Dendritic cell treated with granulocyte-macrophage colony-stimulating factor and Interleukin-4, amounts not matched to agents 40 ng/mL and 50 ng/mL, for 4 days (primary cell): ENCODE measurements at regions of chr4 and their contacts with region 1.

Region 1: GRCh38 chr4:10582059-10582686 is 102.4 kb downstream of the CLNK start:
- H3K4me3 Mint-ChIP-seq: no peak overlapping the region
- H3K27ac Mint-ChIP-seq: no peak overlapping the region
- H3K4me1 Mint-ChIP-seq: peaks cover 13% of the 10 kb centered on the region
- H3K27me3 Mint-ChIP-seq: no peaks in the 10 kb centered on the region

Region 2: DNA sequence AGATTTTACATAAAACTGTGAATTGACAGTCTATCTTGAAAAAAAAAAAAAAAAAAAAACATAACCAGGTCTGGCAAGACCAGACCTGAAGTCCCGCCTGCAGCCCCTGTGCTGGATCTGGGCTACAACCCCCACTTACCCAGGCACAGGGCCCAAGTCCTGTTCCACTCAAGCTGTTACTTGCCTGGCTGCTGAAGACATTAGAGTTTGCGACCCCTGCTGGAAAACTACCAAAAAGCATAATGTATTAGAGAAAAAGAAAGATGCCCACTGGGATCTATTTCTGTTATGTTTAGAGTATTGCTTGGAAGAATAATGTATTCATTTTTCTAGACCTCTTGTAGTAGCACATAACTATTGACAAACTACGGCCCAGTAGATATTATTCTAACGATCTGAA is 841.8 kb after region 1 on chr4:
- intact Hi-C with region 1: loop called (anchors 2 kb)
- H3K4me3 Mint-ChIP-seq: no peak overlapping the region
- H3K27ac Mint-ChIP-seq: no peak overlapping the region
- H3K4me1 Mint-ChIP-seq: peaks cover 18% of the 10 kb centered on the region
- H3K27me3 Mint-ChIP-seq: peaks cover 27% of the 10 kb centered on the region

Region 3: DNA sequence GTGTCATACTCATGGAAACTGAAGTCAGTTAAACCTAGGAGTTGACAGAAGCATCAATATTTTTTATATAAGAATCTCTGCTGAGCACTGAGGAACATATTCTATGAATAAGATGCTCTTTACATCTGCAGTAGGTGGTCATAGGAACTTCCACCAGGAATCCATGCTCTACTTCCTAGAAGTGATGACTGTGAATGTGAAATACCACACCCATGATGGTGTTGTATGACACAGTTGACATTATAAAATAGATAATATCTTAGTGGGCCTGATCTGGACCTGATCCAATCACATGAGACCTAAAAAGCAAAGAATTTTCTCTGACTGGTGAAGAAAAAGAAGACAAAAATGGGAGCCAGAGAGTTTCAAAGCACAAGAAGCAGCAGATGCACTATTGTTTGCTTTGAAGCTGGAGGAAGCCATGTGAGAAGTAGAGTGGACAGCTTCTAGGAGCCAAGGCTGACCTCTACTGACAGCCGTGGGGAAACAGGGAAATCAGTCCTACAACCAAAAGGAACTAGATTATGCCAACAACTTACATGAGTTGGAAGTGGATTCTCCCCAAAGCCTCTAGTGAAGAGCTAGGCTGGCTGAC is 915.1 kb after region 1 on chr4:
- intact Hi-C with region 1: loop called (anchors 2 kb)
- H3K4me3 Mint-ChIP-seq: no peak overlapping the region
- H3K27ac Mint-ChIP-seq: no peak overlapping the region
- H3K4me1 Mint-ChIP-seq: peaks cover 24% of the 10 kb centered on the region
- H3K27me3 Mint-ChIP-seq: no peaks in the 10 kb centered on the region

Region 4: GRCh38 chr4:11720292-11720691 is 1138.1 kb after region 1 on chr4:
- intact Hi-C with region 1: loop called (anchors 1 kb)
- H3K4me3 Mint-ChIP-seq: no peak overlapping the region
- H3K27ac Mint-ChIP-seq: no peak overlapping the region
- H3K4me1 Mint-ChIP-seq: no peaks in the 10 kb centered on the region
- H3K27me3 Mint-ChIP-seq: no peaks in the 10 kb centered on the region